ENCODE measurements at regions of chr10 and their contacts with region 1.

Region 1: GRCh38 chr10:125048101-125048864 is 106.4 kb downstream of the ZRANB1 start:
- DNase-seq: peak; percentile 84
- H3K4me3 ChIP-seq: no peak overlapping the region
- H3K27ac ChIP-seq: peak overlapping the region; percentile 8
- H3K4me1 ChIP-seq: peaks cover 26% of the 10 kb centered on the region
- H3K27me3 ChIP-seq: no peaks in the 10 kb centered on the region
- CTCF ChIP-seq: peak; percentile 94 to 97
- POLR2A ChIP-seq: no peak

Region 2: GRCh38 chr10:124992462-124993344 is 55.6 kb before region 1 on chr10:
- CTCF ChIA-PET with region 1: interaction called, 15 read pairs
- POLR2A ChIA-PET with region 1: no interaction called
- dilution Hi-C with region 1: no loop called
- intact Hi-C with region 1: no loop called
- DNase-seq: peak; percentile 60
- H3K4me3 ChIP-seq: no peak overlapping the region
- H3K27ac ChIP-seq: no peak overlapping the region
- H3K4me1 ChIP-seq: no peaks in the 10 kb centered on the region
- H3K27me3 ChIP-seq: no peaks in the 10 kb centered on the region
- CTCF ChIP-seq: peak; percentile 45 to 55
- POLR2A ChIP-seq: no peak

Region 3: DNA sequence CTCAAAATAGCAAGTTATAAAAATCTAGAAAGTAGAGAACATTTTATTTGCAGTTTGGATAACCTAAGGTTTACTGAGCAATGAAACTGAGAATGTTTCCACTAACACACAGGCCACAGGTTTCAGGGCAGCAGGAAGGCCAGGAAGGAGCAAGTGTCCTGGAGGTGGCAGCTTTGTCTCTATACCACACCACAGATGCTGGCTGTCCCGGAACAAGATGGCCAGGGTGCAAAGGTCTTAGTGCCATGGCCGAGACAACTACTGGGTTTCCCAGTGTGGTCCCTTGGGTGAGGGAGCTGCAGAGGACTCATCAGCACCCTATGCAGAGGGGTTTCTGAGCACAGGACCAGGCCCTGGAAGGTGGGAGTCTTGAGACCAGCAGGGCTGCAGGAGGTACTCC is 20.1 kb after region 1 on chr10:
- CTCF ChIA-PET with region 1: interaction called, 159 read pairs
- POLR2A ChIA-PET with region 1: no interaction called
- dilution Hi-C with region 1: no loop called
- intact Hi-C with region 1: no loop called
- DNase-seq: no peak
- H3K4me3 ChIP-seq: no peak overlapping the region
- H3K27ac ChIP-seq: no peak overlapping the region
- H3K4me1 ChIP-seq: peaks cover 8% of the 10 kb centered on the region
- H3K27me3 ChIP-seq: no peaks in the 10 kb centered on the region
- CTCF ChIP-seq: no peak
- POLR2A ChIP-seq: no peak

Region 4: DNA sequence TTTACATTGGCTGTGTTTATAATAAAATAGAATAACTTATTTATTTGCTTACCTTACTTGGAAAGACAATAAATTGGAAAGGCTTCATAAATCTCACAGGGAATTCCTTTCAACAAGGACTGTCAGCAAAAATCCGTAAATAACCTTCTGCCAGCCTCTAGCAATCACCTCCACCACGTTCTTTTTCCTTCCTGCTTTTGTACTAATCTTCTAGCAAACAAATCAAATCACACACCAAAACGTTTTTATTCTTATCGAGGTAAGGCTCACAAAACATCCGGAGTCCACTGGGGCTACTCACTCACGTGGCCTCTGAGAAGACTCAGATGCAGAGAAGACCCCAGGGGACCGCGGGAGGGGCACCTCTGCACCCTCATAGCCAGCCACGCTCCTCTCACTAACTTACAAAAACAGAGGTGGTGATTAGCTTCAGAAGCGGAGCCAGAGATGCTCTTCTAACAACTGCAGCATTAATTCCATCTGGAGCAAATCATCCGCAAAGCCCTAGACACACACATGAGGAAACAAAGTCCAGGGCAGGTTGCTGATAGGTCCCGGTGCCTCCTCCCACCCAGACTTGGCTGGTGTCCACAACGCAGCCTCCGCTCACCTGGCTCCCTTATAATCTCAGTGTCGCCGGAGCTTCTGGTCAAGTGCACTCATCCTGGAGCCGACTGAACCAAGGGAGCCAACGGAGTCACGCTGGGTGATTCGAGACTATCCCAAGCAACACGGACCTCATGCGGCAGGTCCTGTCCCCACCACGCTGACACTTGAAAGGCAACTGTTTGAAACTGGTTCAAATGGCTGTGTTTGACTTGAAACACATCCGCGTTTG is 89.5 kb after region 1 on chr10:
- CTCF ChIA-PET with region 1: interaction called, 13 read pairs
- POLR2A ChIA-PET with region 1: no interaction called
- dilution Hi-C with region 1: no loop called
- intact Hi-C with region 1: no loop called
- DNase-seq: peak; percentile 87
- H3K4me3 ChIP-seq: no peak overlapping the region
- H3K27ac ChIP-seq: no peak overlapping the region
- H3K4me1 ChIP-seq: peaks cover 20% of the 10 kb centered on the region
- H3K27me3 ChIP-seq: no peaks in the 10 kb centered on the region
- CTCF ChIP-seq: no peak
- POLR2A ChIP-seq: no peak

Region 5: GRCh38 chr10:125160856-125161706 is 112.8 kb after region 1 on chr10:
- CTCF ChIA-PET with region 1: interaction called, 14 read pairs
- POLR2A ChIA-PET with region 1: no interaction called
- dilution Hi-C with region 1: no loop called
- intact Hi-C with region 1: loop called (anchors 5 kb)
- DNase-seq: peak; percentile 81
- H3K4me3 ChIP-seq: peak overlapping the region; percentile 49 to 98 (median 77)
- H3K27ac ChIP-seq: peak overlapping the region; percentile 59
- H3K4me1 ChIP-seq: peaks cover 18% of the 10 kb centered on the region
- H3K27me3 ChIP-seq: no peaks in the 10 kb centered on the region
- CTCF ChIP-seq: peak; percentile 21 to 50
- POLR2A ChIP-seq: no peak

Region 6: DNA sequence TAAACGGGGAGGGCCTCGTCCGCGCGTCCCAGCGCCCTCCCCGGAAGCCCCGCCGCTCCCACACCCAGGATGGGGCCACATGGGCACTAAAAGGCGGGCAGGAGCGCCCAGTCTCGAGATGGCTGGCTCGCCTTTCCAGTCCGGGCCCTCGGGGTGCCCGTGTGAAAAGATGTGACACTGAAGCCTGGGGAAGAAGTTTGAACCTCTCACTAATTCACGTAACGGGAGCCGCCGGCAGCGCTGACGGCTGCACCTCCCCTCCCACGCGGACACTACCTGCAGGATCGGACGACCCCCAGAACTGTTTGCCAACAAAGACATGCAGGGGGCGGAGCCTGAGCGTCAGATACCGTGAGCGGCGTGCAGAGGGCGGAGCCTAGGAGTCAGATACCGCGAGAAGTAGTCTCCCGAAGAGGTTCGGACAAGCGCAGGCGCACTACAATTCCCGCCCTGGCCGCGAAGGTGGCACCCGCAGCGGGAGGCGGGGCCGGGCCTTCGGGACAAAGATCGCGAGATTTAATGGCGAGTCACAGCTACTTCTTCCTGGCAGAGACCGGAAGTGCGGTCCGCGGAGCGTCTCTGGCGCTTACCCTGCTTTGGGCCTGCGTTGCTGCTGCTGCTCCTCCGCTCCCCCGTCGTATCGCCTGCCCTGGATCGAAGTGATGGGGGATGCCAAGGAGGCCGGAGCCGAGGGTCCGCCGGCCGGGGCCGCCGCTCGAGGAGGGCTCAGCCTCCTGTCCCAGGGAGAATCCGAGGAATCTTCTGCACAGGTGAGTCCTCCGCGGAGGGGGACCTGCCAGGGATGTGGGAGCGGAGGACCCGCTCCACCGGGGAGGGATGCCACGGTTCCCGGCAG is 671.1 kb after region 1 on chr10 and contains the start of gene EDRF1:
- CTCF ChIA-PET with region 1: no interaction called
- POLR2A ChIA-PET with region 1: no interaction called
- dilution Hi-C with region 1: no loop called
- intact Hi-C with region 1: loop called (anchors 10 kb)
- DNase-seq: peak; percentile 100
- H3K4me3 ChIP-seq: peak within 1 kb of the TSS; percentile 65 to 98 (median 93)
- H3K27ac ChIP-seq: peak within 1 kb of the TSS; percentile 67
- H3K4me1 ChIP-seq: peaks cover 6% of the 10 kb centered on the region
- H3K27me3 ChIP-seq: no peaks in the 10 kb centered on the region
- CTCF ChIP-seq: no peak
- POLR2A ChIP-seq: peak; percentile 97
- total RNA-seq, gene EDRF1: 24.7 and 27.8 TPM in 2 replicates